ENCODE measurements at regions of chr1 and their contacts with region 1.

Region 1: DNA sequence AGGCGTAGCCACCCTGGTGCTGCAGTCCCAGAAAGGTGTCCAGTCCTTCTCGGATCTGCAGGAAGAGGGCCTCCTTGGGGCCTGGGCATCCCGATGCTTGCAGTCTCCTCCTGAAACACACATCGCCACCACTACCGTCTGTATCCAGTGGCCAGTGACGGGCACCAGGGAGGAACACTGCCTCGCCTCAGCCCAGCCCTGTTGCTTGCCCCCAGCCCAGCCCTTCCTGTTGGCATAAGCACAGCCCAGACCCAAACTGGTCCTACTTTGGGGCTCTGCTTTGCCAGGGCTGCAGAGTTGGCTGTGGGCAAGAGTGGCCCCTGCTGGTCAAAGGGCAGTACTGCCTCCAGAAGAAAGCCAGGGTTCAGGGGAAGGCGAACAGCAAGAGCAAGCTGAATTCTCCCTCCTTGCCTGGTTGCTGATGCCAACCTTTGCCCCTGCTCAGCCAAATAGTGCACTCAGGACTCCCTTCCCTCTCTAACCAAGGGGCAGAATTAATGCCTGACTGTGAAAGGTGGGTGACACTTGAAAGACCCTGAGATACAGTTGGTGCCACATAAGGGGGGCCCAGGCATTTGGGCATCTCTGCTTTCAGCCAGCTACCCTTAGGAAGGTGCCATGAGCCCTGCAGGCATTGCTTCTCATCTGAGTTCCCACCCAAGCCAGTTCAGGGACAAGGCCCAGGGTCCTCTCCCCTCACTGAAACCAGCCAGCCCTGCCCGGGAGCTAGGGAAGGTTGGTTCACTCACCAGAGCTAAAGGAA is 11.1 kb upstream of the ARHGEF2 start:
- DNase-seq: no peak
- H3K4me3 ChIP-seq: peak overlapping the region; percentile 39
- CTCF ChIP-seq: peak; percentile 92

Region 2: DNA sequence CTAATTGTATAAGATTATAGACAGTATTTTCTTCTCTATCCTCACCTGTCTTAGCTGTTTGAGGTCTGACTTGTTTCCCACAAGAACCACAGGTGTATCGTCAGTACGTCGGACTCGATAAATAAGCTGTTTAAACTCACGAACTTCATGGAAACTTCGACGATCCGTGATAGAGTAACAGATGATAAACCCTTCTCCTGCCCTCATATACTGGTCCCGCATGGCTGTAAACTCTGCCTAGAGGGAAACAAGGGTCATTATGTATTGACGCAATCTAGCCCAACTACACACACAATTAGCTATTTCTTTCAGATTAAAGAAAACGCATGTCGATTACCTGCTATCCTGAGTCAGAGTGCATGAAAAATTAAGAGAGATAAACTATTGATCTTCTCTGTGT is 85.2 kb before region 1 on chr1:
- CTCF ChIA-PET with region 1: no interaction called
- POLR2A ChIA-PET with region 1: no interaction called
- DNase-seq: no peak
- H3K4me3 ChIP-seq: no peak overlapping the region
- CTCF ChIP-seq: no peak

Region 3: GRCh38 chr1:155920717-155921116 is 68.7 kb before region 1 on chr1:
- CTCF ChIA-PET with region 1: interaction called, 12 read pairs
- POLR2A ChIA-PET with region 1: no interaction called
- DNase-seq: no peak
- H3K4me3 ChIP-seq: no peak overlapping the region
- CTCF ChIP-seq: no peak

Region 4: DNA sequence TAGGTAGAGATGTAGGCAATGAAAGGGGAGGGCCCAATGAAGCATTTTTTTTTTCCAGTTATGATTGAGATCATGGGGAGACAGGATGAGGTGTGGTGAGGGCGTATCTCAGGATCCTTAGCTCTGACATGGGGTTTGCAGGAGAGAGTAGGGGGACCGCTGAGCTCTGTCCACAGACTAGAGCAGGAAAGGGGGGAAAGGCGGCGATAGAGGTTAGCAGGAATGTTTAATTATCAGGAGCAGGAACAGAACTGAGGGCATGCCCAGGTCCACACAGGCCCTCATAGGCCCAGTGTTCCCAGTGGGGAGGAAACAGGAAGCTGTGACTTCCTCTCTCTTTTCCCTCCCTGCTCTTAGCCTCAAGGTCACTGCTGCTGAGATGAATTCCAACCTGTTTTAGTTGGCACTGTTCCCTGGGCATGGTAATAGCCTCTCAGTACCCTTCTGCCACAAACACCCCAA is 48.9 kb before region 1 on chr1:
- CTCF ChIA-PET with region 1: interaction called, 102 read pairs
- POLR2A ChIA-PET with region 1: interaction called, 3 read pairs
- DNase-seq: no peak
- H3K4me3 ChIP-seq: no peak overlapping the region
- CTCF ChIP-seq: no peak

Region 5: DNA sequence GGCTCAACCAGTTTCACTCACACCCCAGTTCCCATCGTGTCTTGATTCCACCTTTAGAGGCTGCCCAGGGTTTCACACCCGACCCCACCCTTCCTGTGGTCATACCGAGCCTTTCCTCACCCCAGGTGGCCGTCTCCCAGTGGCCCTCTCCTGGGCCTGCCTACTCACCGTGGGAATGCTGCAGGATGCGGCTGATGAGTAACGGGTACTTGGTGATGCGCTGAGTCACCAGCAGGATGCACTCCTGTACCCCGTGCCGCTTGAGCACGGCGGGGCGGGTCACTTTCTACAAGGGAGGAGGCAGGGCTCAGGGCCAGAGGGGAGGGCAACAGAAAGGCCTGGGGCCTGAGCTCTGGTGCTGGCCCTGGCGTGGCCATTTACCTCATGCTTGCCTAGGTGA is 27.5 kb before region 1 on chr1:
- CTCF ChIA-PET with region 1: interaction called, 33 read pairs
- POLR2A ChIA-PET with region 1: interaction called, 4 read pairs
- DNase-seq: peak; percentile 74
- H3K4me3 ChIP-seq: no peak overlapping the region
- CTCF ChIP-seq: peak; percentile 71

Region 6: GRCh38 chr1:155978325-155978972 is 11.0 kb before region 1 on chr1 and contains the start of gene ARHGEF2:
- CTCF ChIA-PET with region 1: interaction called, 30 read pairs
- POLR2A ChIA-PET with region 1: interaction called, 16 read pairs
- DNase-seq: no peak
- H3K4me3 ChIP-seq: peak within 1 kb of the TSS; percentile 88
- CTCF ChIP-seq: peak; percentile 30

Region 7: DNA sequence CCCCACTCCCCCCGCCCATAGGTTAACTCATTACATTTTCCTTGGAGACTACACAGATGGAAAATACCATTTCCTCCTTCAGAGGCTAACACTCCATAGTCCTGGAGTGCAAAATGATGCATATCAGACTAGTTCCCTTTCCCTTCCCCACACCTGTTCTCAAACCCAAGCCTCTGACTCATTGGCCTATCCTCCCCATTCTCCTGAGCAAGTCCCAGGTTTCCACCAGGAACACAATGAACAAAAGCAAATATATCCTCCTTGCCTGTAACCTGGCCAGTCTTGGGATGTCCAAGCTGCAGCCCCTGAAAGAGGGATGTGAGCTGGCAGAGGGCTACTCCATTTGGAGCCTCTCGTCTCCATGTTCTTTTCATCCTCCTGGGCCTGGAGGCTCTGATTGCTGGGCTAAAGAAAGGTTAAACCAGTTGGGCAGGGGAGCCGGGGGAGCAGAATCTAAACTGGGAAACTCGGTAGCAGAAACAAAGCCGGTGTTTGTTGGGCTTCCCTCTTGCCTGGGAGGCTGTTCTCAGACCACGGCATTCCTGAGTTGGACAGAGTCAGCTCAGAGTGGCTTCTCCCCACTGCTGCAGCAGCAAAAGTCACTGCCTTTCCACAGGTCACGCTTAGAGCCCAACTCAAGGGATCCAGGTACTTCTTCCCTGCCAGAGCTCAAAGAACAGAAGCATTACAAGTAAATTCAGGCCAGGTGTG is 17.4 kb after region 1 on chr1:
- CTCF ChIA-PET with region 1: interaction called, 16 read pairs
- POLR2A ChIA-PET with region 1: no interaction called
- DNase-seq: no peak
- H3K4me3 ChIP-seq: no peak overlapping the region
- CTCF ChIP-seq: no peak

Region 8: GRCh38 chr1:156795787-156796186 is 806.4 kb after region 1 on chr1:
- CTCF ChIA-PET with region 1: no interaction called
- POLR2A ChIA-PET with region 1: no interaction called
- DNase-seq: no peak
- H3K4me3 ChIP-seq: no peak overlapping the region
- CTCF ChIP-seq: no peak

Measured in AG04449 (cell line).